Activated CD4-positive, alpha-beta memory T cell treated with anti-CD3 and anti-CD28 coated beads for 36 hours (primary cell): ENCODE measurements at regions of chr6 and their contacts with region 1.

Region 1: DNA sequence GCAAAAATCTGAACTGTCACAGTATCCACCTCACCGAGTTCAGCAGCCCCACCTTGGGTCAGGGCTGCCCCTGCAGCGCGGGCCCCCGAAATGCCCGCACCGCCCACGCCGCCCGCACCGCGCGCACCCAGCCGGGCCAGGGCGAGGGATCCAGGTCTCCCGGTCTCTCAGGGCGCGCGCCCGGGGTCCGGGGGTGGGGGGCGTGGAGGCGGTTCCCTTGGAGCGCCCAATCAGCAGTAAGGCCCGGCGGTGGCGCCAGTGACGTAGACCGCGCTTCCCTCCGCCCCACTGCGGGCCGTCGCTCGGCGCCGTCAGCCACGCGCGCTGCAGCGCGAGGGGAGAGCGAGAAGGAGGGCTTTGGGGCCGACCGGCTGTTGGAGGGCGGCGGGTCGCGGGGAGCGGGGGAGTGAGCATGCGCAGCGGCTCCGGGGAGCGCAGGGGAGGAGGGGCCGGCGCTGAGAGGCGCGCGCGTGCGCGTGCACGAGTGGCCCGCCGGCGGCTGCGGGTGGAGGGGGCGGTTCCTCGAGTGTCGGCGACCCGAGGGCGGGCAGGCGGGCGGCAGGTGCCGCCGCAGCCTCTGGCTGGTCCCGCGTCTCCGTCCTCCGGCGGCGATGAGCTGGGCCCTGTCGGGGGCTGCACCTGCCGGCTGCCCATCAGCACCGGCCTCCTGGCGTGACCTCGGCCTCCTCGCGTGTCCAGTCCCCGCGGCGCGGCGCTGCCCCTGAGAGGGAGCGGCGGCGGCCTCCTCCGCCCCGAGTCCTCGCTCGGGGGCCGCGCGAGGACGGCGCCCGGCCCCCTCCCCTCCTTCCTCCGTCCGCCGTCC is at the start of gene TMEM170B:
- DNase-seq: peak; percentile 94
- H3K4me3 Mint-ChIP-seq: peak within 1 kb of the TSS; percentile 73
- H3K27ac Mint-ChIP-seq: no peak within 1 kb of the TSS
- H3K4me1 Mint-ChIP-seq: peaks cover 9% of the 10 kb centered on the region
- H3K27me3 Mint-ChIP-seq: peaks cover 14% of the 10 kb centered on the region
- total RNA-seq, gene TMEM170B: 0.83 to 1.1 TPM

Region 2: DNA sequence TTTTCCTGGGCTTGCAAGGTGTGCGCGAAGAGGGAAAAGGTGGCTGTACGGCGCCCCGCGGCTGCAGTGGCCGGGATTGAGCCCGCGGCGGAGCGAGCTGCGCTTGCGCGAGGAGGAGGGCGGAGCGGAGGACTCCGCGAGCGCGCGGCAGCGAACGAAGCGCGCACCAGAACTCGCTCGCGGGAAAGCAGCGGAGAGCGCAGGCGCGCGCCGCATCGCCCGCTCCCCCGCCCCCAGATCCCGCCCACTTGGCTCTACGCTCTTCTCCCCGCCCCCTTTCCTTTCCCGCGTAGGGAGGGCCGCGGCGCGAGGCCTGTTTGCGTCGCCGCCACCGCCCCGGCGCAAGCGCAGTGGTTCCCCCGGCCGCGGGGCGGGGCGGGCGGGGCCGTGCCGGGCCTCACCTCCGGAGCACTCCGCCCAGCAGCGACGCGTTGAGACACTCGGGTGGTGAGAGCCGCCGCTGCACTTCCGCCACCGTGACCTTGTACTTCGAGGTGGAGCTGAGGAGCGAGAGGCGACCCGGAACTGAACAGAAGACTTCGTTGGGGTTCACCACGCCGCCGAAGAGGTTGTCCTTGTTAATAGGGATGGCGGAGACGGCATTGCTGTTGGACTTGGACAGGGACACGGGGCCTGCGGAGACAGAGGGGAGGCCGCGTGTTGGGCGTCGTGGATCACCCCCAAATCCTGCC is 1133.2 kb before region 1 on chr6:
- CTCF ChIA-PET with region 1: no interaction called
- POLR2A ChIA-PET with region 1: no interaction called
- intact Hi-C with region 1: loop called (anchors 2 kb)
- DNase-seq: peak; percentile 93
- H3K4me3 Mint-ChIP-seq: peak overlapping the region; percentile 76
- H3K27ac Mint-ChIP-seq: peak overlapping the region; percentile 77
- H3K4me1 Mint-ChIP-seq: peaks cover 10% of the 10 kb centered on the region
- H3K27me3 Mint-ChIP-seq: peaks cover 50% of the 10 kb centered on the region